ENCODE measurements at regions of chr1 and their contacts with region 1.

Region 1: GRCh38 chr1:17661546-17662157 is 93.5 kb upstream of the ACTL8 start:
- DNase-seq: peak; percentile 57 to 82 (median 67)
- H3K4me3 ChIP-seq: no peak overlapping the region
- H3K27ac ChIP-seq: no peak overlapping the region
- H3K4me1 ChIP-seq: no peaks in the 10 kb centered on the region
- H3K27me3 ChIP-seq: no peaks in the 10 kb centered on the region
- CTCF ChIP-seq: peak; percentile 59 to 85 (median 82)
- POLR2A ChIP-seq: no peak

Region 2: GRCh38 chr1:17759114-17759513 is 97.5 kb after region 1 on chr1:
- intact Hi-C with region 1: no loop called
- DNase-seq: no peak
- H3K4me3 ChIP-seq: no peak overlapping the region
- H3K27ac ChIP-seq: no peak overlapping the region
- H3K4me1 ChIP-seq: no peaks in the 10 kb centered on the region
- H3K27me3 ChIP-seq: no peaks in the 10 kb centered on the region
- CTCF ChIP-seq: no peak
- POLR2A ChIP-seq: no peak

Region 3: DNA sequence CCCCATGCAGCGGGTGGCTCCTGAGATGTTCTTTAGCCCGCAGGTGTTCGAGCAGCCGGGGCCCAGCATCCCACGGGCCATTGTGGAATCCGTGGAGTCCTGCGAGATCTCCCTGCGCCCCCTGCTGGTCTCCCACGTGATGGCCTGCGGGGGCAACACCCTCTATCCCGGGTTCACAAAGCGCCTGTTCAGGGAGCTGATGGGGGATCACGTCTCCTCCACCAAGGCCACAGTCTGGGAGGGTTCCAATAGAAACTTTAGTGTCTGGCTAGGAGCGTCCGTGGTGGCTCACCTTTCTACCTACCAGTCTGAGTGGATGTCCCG is 164.5 kb after region 1 on chr1:
- intact Hi-C with region 1: loop called (anchors 10 kb)
- DNase-seq: peak in 6 of 7 donors; percentile 36 to 71 (median 48)
- H3K4me3 ChIP-seq: no peak overlapping the region
- H3K27ac ChIP-seq: no peak overlapping the region
- H3K4me1 ChIP-seq: no peaks in the 10 kb centered on the region
- H3K27me3 ChIP-seq: peaks cover 9% of the 10 kb centered on the region
- CTCF ChIP-seq: peak; percentile 25 to 60 (median 47)
- POLR2A ChIP-seq: no peak

Region 4: GRCh38 chr1:18091660-18092446 is 430.2 kb after region 1 on chr1:
- intact Hi-C with region 1: loop called (anchors 10 kb)
- DNase-seq: peak in 5 of 7 donors; percentile 39 to 72 (median 66)
- H3K4me3 ChIP-seq: no peak overlapping the region
- H3K27ac ChIP-seq: no peak overlapping the region
- H3K4me1 ChIP-seq: no peaks in the 10 kb centered on the region
- H3K27me3 ChIP-seq: no peaks in the 10 kb centered on the region
- CTCF ChIP-seq: no peak
- POLR2A ChIP-seq: no peak

Measured in adrenal gland (tissue), 19 donors.